ENCODE measurements at regions of chr2 and their contacts with region 1.

Region 1: DNA sequence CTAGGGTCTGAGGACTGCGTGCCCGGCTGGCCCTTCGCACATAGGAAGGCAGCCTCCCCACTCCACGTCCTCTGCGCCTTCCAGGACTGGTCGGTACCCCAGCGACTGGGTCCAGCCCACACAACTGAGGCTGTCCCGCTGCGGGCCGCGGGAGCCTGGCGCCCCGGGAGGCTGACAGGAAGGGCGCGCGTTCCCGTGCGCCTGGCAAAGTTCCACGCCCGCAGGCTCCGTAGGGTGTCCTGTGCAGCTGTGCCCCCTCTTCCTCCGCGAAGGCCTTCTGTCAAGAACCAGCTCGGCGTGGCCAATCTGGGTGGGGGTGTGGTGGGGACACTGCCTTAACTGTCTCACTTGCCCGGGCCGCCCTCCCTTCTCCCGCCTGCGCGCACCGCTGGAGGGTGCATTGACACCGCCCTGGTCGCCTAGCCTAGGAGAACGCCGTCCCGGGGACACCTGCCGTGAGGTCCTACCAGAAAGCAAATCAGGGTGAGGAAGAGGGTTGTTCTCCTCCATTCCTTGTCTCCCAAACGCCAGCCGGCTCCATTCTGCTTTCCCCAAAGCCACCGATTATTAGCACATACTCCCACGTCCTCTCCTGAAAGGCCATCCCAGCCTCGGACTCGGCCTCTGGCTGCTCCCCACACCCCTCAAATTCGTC is 618 bp upstream of the LYPD1 start:
- DNase-seq: peak; percentile 78
- H3K4me3 Mint-ChIP-seq: peak overlapping the region; percentile 85
- H3K27ac Mint-ChIP-seq: peak overlapping the region; percentile 57
- H3K4me1 Mint-ChIP-seq: peaks cover 8% of the 10 kb centered on the region
- H3K27me3 Mint-ChIP-seq: no peaks in the 10 kb centered on the region
- CTCF ChIP-seq: no peak

Region 2: DNA sequence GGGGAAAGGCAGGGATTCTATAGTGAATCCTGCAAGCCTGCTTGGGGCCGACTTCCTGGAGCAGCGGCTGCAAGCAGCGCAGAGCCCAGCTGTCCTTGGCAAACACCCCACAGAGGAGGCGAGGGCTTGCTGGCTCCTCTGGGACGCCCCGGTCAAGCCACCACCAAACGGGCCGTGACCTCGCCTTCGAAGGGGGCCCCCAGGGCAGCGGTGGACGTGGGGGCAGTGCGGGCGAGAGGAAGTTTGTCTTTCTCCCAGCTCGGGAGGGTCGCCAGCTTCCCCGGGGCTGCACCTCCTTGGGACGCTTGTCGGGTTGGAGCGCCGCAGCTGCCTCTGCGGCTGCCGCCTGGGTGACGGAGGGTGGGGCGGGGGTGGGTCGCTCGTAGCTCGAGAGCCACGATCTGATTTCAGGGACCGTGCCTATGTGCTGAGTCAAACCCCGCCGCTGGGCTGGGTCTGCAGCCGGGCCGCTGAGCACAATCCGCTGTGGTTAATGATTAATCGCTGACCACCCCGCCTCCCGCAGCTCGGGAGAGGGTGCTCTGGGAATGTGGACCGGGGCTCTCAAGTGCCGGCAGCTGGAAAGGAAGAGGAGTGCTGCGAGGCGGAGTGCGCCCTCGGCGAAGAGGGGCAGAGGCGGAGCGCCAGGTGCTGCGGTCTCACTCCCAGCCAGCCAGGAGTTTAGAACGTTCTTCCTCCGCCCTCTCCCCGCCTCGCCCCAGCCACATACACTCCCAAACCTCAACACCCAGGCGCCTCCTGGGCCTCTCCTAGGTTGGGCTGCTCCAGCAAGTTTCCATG is 254.3 kb before region 1 on chr2 and contains the start of gene GPR39:
- CTCF ChIA-PET with region 1: no interaction called
- intact Hi-C with region 1: loop called (anchors 5 kb)
- DNase-seq: peak; percentile 97
- H3K4me3 Mint-ChIP-seq: peak within 1 kb of the TSS; percentile 77
- H3K27ac Mint-ChIP-seq: peak within 1 kb of the TSS; percentile 62
- H3K4me1 Mint-ChIP-seq: peaks cover 50% of the 10 kb centered on the region
- H3K27me3 Mint-ChIP-seq: no peaks in the 10 kb centered on the region
- CTCF ChIP-seq: no peak
- total RNA-seq, gene GPR39: 24.1 and 24.9 TPM in 2 replicates

Region 3: GRCh38 chr2:132651115-132652045 is 19.2 kb before region 1 on chr2:
- CTCF ChIA-PET with region 1: no interaction called
- intact Hi-C with region 1: no loop called
- DNase-seq: no peak
- H3K4me3 Mint-ChIP-seq: no peak overlapping the region
- H3K27ac Mint-ChIP-seq: no peak overlapping the region
- H3K4me1 Mint-ChIP-seq: no peaks in the 10 kb centered on the region
- H3K27me3 Mint-ChIP-seq: no peaks in the 10 kb centered on the region
- CTCF ChIP-seq: no peak

Region 4: GRCh38 chr2:132733094-132733493 is 62.5 kb after region 1 on chr2:
- CTCF ChIA-PET with region 1: no interaction called
- intact Hi-C with region 1: no loop called
- DNase-seq: no peak
- H3K4me3 Mint-ChIP-seq: no peak overlapping the region
- H3K27ac Mint-ChIP-seq: no peak overlapping the region
- H3K4me1 Mint-ChIP-seq: no peaks in the 10 kb centered on the region
- H3K27me3 Mint-ChIP-seq: peaks cover 8% of the 10 kb centered on the region
- CTCF ChIP-seq: no peak

Region 5: DNA sequence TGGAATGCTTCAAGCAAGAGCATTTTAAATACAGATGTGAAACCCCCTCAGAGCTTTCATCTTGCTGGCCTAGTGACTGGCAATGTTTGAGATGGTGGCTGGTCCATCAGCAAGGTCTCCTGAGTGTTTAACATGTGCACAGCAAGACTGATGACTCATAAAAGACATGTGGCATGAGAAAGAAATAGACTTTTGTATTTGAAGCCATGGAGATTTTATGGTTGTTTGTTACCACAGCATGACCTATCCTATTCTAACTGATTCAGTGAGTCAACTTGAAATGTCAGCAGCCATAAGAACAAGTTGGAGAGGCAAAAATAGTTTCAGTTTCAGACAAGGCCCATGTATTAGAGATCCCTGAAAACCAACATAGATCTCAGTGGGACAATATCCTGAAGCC is 154.1 kb after region 1 on chr2:
- CTCF ChIA-PET with region 1: no interaction called
- intact Hi-C with region 1: loop called (anchors 10 kb)
- DNase-seq: no peak
- H3K4me3 Mint-ChIP-seq: no peak overlapping the region
- H3K27ac Mint-ChIP-seq: no peak overlapping the region
- H3K4me1 Mint-ChIP-seq: no peaks in the 10 kb centered on the region
- H3K27me3 Mint-ChIP-seq: no peaks in the 10 kb centered on the region
- CTCF ChIP-seq: no peak

Region 6: GRCh38 chr2:133040170-133040569 is 369.5 kb after region 1 on chr2:
- CTCF ChIA-PET with region 1: no interaction called
- intact Hi-C with region 1: loop called (anchors 10 kb)
- DNase-seq: no peak
- H3K4me3 Mint-ChIP-seq: no peak overlapping the region
- H3K27ac Mint-ChIP-seq: peak overlapping the region; percentile 47
- H3K4me1 Mint-ChIP-seq: peaks cover 31% of the 10 kb centered on the region
- H3K27me3 Mint-ChIP-seq: no peaks in the 10 kb centered on the region
- CTCF ChIP-seq: no peak

Region 7: DNA sequence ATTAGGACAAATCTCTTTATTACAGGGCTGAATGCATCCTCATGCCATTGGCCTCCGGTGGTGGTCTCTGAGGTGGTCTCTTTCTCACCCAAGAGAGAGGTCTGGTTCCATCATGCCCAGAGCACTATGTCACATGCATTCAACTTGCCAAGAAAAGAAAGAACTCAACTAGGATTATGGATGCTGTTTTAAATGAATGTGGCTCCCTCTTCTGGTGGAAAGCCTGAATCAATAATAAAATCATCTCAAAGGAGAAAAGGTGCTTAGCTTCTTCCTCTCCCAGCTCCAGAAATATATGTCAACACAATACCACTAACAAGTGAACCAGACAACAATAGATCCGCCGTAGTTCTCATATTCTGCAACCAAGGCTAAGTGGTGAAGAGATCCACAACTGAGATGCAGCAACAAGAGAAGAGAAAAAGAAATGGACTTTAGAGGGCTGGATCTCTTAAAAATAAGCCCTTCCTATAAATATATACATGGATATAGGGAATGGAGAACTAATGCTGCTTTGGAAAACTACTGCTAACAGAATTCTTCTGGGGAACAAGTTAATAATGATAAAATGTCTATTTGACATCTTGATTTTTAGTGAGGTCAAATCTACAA is 500.9 kb after region 1 on chr2:
- CTCF ChIA-PET with region 1: interaction called, 5 read pairs
- intact Hi-C with region 1: loop called (anchors 2 kb)
- DNase-seq: peak; percentile 46
- H3K4me3 Mint-ChIP-seq: no peak overlapping the region
- H3K27ac Mint-ChIP-seq: no peak overlapping the region
- H3K4me1 Mint-ChIP-seq: no peaks in the 10 kb centered on the region
- H3K27me3 Mint-ChIP-seq: no peaks in the 10 kb centered on the region
- CTCF ChIP-seq: peak; percentile 49